Esophagus muscularis mucosa (tissue), 4 donors: ENCODE measurements at regions of chr2 and their contacts with region 1.

Region 1: DNA sequence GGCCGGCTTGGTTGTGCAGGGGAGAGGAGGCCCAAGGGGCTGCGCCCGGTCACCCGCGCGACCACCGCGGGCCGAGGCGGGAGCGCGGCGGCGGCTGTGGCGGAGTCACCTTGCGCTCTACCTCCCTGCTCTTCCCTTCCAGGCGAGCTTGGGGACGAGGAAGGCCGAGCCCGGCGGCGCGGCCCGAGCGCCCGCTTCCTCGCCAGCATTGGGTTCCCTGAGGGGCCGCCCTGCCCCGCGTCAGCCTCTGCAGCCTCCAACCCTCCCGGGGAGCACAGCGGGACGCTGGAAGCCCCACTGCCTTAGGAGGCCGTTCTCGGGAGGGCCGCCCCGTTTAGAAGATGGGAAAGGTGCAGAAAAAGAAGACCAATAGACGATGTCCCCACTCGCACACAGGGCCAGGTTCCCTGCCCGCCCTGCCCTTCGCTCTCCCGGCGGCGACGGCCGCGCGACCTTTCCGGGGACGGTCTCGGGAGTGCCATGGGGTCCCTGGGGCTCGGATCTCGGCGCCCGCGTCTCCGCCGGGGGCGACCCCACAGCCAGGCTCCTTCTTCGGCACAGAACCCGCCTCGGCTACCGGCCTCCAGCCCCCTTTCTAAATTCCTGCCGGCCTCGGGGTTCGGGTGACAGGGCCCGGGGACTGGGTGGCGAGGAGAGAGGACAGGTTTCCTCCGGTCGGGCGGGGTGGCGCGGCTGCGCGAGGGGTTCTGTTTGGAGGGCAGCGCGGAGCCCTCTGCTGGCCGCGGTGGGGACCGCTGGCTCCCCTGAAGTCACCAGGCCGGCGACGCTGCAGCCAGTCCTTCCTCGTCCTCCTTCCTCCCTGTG is 85.5 kb downstream of the HS6ST1 start:
- DNase-seq: peak; percentile 94
- H3K4me3 ChIP-seq: peak overlapping the region; percentile 61 to 88 (median 78)
- H3K27ac ChIP-seq: peak overlapping the region; percentile 68 to 77 (median 73)
- H3K4me1 ChIP-seq: peaks cover 8 to 36% (median 29%) of the 10 kb centered on the region in 4 donors
- H3K27me3 ChIP-seq: no peaks in the 10 kb centered on the region
- CTCF ChIP-seq: peak; percentile 84 to 95 (median 91)
- EP300 ChIP-seq: no peak
- POLR2A ChIP-seq: no peak

Region 2: DNA sequence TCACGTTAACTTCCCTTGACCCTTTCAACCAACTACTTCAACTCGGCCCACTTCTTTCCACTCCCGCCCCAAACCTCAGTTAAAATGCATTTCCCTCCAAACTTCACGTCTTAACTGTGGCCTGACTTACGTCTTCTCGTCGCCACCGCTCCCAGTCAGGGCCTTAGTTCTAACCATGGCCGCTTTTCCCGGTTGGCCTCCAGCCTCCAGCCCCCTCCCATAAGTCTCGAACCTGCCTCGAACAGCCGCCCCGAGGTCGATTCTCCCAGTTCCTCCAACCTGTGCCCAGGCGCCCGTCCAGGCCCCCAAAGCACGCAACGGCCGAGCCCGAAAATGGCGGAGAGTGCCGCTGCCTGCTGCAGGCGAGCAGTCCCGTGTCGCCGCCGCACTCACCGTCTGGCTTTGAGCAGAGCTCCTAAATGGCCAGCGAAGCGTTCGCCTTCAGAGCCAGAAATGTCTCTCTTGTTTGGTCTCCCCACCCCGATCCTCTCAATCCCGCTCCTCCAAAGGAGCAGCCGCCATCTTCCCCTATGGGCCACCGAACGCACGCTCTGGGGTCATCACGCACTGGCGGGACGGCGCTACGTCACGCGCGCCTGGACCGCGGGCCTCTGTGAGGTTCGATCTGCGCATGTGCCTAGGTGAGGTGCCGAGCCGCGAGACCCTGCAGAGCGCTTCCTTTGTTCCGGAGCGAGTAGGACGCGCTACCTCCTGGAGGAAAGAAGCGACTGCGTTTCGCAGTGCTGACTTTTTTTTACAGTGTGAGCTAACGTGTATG is 422.4 kb before region 1 on chr2 and contains the start of gene WDR33:
- intact Hi-C with region 1: no loop called
- DNase-seq: peak; percentile 96
- H3K4me3 ChIP-seq: peak within 1 kb of the TSS; percentile 73 to 85 (median 78)
- H3K27ac ChIP-seq: peak within 1 kb of the TSS; percentile 91 to 94 (median 94)
- H3K4me1 ChIP-seq: peaks cover 24 to 49% (median 47%) of the 10 kb centered on the region in 4 donors
- H3K27me3 ChIP-seq: no peaks in the 10 kb centered on the region
- CTCF ChIP-seq: peak; percentile 11 to 32 (median 21)
- EP300 ChIP-seq: no peak
- POLR2A ChIP-seq: peak; percentile 50
- total RNA-seq, gene WDR33: 25.8 to 35.3 (median 33.3) TPM

Region 3: DNA sequence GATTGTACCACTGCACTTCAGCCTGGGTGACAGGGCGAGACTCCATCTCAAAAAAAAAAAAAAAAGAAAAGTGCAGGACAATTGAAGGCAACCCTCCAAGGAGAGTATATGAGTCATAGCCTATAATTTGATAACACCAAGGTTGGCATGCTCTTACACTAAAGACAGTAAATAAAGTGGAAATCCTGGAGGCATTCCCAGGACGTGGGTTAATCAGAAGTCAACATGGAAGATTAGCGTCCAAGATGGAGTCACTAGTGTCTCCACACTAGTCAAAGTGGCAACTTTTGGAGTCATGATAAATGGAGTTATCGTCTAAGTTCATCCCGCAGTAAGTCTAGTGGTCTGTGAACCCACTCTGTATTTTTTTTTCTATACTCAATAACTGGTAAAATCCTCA is 163.4 kb before region 1 on chr2:
- intact Hi-C with region 1: no loop called
- DNase-seq: no peak
- H3K4me3 ChIP-seq: no peak overlapping the region
- H3K27ac ChIP-seq: no peak overlapping the region
- H3K4me1 ChIP-seq: no peaks in the 10 kb centered on the region
- H3K27me3 ChIP-seq: no peaks in the 10 kb centered on the region
- CTCF ChIP-seq: no peak
- EP300 ChIP-seq: no peak
- POLR2A ChIP-seq: no peak

Region 4: GRCh38 chr2:128178650-128179460 is 54.3 kb before region 1 on chr2:
- intact Hi-C with region 1: loop called (anchors 2 kb)
- DNase-seq: no peak
- H3K4me3 ChIP-seq: no peak overlapping the region
- H3K27ac ChIP-seq: peak overlapping the region in 3 of 4 donors; percentile 54 to 74 (median 63)
- H3K4me1 ChIP-seq: peaks cover 5 to 12% (median 9%) of the 10 kb centered on the region in 4 donors
- H3K27me3 ChIP-seq: no peaks in the 10 kb centered on the region
- CTCF ChIP-seq: peak; percentile 79 to 90 (median 83)
- EP300 ChIP-seq: no peak
- POLR2A ChIP-seq: no peak

Region 5: GRCh38 chr2:128196471-128196931 is 36.7 kb before region 1 on chr2:
- intact Hi-C with region 1: loop called (anchors 5 kb)
- DNase-seq: no peak
- H3K4me3 ChIP-seq: peak overlapping the region in 2 of 4 donors; percentile 13 to 18
- H3K27ac ChIP-seq: peak overlapping the region; percentile 18 to 63 (median 58)
- H3K4me1 ChIP-seq: peaks cover 13 to 25% (median 21%) of the 10 kb centered on the region in 4 donors
- H3K27me3 ChIP-seq: no peaks in the 10 kb centered on the region
- CTCF ChIP-seq: no peak
- EP300 ChIP-seq: no peak
- POLR2A ChIP-seq: no peak

Region 6: DNA sequence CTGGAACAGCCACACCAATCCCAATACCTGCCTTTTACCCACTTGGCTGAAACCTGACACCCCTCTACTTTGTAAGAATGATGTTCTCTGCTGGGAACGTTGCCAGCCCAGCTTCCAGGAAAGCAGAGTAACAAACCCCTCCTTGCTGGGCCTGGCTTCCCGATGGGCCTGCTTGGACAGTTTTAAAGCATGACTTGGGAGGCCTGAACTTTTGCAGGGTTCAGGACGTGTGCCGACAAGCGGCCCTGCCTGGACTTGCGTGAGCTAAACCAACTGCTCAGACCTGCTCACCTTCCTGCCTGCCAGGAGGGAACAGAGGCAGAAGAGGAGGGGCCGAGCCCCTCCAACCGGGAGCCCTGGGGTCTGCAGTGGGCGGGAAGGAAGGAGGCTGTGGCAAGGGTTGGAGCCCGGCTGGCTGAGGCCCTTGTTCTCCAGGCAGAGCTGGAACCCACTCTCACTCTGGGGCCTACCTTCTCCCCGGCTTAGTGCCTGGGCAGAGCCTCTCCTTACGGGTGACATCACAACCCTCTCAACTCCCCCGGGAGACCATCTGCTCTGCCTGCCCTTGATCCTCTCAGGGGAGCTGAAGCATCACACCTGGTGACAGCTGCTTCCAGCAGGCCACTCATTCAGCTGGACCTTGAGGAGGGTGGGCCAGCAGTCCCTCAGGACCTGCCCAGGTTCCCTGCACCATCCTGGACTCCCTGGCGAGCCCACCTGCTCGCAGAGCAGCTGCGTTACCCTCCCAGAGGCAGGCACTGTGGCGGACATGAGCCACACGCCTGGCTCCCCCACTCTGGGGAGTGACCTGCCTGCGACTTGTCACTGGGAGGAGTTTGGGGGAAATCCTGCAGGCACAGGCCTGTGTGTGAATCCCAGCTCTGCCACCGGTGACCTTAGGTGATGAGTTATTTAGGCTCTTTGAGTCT is 72.2 kb after region 1 on chr2:
- intact Hi-C with region 1: loop called (anchors 10 kb)
- DNase-seq: no peak
- H3K4me3 ChIP-seq: peak overlapping the region in 3 of 4 donors; percentile 0 to 26 (median 7)
- H3K27ac ChIP-seq: peak overlapping the region; percentile 60 to 77 (median 72)
- H3K4me1 ChIP-seq: peaks cover 72 to 98% (median 91%) of the 10 kb centered on the region in 4 donors
- H3K27me3 ChIP-seq: no peaks in the 10 kb centered on the region
- CTCF ChIP-seq: no peak
- EP300 ChIP-seq: no peak
- POLR2A ChIP-seq: no peak